AG04449 (cell line): ENCODE measurements at regions of chr18 and their contacts with region 1.

Region 1: GRCh38 chr18:12904012-12904516 is 20.0 kb upstream of the PTPN2 start:
- DNase-seq: no peak
- H3K4me3 ChIP-seq: no peak overlapping the region
- CTCF ChIP-seq: no peak

Region 2: GRCh38 chr18:12883684-12884405 is 20.2 kb before region 1 on chr18 and contains the start of gene PTPN2:
- CTCF ChIA-PET with region 1: interaction called, 16 read pairs
- POLR2A ChIA-PET with region 1: interaction called, 7 read pairs
- DNase-seq: peak; percentile 67
- H3K4me3 ChIP-seq: peak within 1 kb of the TSS; percentile 93
- CTCF ChIP-seq: no peak

Region 3: GRCh38 chr18:12890506-12890905 is 13.6 kb before region 1 on chr18:
- CTCF ChIA-PET with region 1: interaction called, 82 read pairs
- POLR2A ChIA-PET with region 1: no interaction called
- DNase-seq: no peak
- H3K4me3 ChIP-seq: no peak overlapping the region
- CTCF ChIP-seq: no peak